Vagina (tissue), 2 donors: ENCODE measurements at regions of chr12 and their contacts with region 1.

Region 1: DNA sequence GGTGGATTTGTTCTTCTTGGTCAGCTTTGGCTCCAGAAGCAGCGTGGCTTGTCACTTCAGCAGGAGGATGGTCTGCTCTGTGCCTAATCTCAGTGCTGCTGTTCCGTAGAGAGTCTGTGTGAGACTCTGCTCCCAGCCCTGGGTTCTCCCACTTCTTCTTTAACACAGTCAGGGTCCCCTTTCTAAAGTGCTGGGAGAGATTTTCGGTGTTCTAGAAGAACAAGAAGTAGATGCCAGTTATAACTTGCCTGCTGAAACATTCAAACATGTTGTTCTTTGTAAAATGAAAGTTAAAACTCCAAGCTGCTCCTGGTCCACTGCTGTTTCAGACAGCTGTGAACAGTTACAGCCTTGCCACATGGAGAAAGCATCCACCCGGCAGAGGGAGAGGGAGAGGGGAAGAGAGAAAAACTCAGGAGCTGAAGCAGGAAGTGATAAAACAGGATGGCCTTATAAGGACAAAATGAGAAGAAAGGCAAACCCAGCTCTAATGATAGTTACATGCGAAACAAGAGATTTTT is 55.2 kb upstream of the CERS5 start:
- DNase-seq: peak in 1 of 2 donors; percentile 91
- H3K4me3 ChIP-seq: peak overlapping the region; percentile 47 to 55
- H3K27ac ChIP-seq: peak overlapping the region; percentile 86
- H3K4me1 ChIP-seq: peaks cover 42% of the 10 kb centered on the region
- H3K27me3 ChIP-seq: no peaks in the 10 kb centered on the region
- CTCF ChIP-seq: no peak
- POLR2A ChIP-seq: peak in 1 of 2 donors; percentile 30

Region 2: DNA sequence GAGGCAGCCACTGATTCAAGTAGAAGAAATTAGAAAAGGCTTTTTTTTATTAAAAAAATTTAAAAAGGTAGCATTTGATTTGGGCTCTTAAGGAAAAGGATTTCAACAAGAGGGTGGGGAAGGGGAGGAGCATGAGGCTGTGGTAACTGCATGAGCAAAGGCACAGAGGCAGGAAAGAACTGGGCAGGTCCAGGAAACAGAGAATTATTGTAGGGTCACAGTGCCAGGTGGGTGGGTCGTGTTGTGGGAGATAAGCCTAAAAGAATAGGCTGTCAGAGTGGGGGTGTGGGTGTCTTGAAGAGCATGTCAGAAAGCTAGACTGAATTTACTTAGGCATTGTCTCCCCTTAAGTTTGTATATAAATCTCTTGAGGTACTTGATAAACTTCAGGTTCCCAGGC is 53.2 kb after region 1 on chr12:
- intact Hi-C with region 1: loop called (anchors 5 kb)
- DNase-seq: no peak
- H3K4me3 ChIP-seq: no peak overlapping the region
- H3K27ac ChIP-seq: no peak overlapping the region
- H3K4me1 ChIP-seq: no peaks in the 10 kb centered on the region
- H3K27me3 ChIP-seq: no peaks in the 10 kb centered on the region
- CTCF ChIP-seq: no peak
- POLR2A ChIP-seq: no peak